ENCODE measurements at regions of chr17 and their contacts with region 1.

Region 1: DNA sequence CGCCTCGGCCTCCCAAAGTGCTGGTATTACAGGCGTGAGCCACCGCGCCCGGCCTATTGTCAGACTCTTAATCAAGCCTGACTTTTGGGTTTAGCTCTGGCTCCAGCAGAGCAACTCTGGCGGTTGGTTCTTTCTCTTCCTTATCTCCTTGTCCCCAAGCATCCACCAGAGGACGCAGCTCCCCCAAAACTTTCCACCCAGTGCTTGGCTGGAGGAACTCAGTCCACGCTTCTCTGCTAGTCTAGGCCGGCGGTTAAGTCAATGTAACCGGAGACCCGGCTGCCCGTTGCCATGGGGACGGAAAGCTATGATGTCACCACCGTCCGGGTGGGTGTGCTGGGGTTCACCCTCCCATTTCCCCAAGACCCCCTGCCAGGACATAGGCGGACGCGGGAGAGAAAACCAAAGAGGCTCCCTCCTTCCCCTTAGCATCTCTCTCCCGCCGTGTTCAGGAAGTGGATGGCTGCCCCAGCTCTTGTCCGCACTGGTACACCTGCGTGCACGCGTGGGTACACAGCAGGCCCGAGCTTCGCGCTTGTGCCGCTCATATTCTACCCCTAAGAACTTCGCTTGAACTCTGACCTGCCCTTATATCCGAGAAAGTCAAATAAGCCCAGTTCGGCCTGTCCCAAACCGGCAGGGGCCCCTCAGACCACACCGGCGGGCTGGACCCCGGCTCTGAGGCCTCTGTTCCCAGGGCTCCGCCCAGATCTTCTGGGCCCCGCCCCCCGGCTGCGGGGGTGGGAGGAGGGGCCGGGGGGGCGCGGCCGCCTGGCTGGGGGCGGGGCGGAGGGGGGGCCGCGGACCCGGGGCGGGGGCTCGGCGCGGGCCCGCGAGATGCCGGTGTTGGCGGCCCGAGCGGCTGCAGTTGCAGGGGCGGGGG is at the start of gene RND2:
- DNase-seq: peak; percentile 86 to 90 (median 88)
- ATAC-seq: peak; percentile 63 to 79 (median 72)
- H3K4me3 ChIP-seq: peak within 1 kb of the TSS in 11 of 12 donors; percentile 36 to 80 (median 62)
- H3K27ac ChIP-seq: peak within 1 kb of the TSS in 10 of 12 donors; percentile 13 to 83 (median 60)
- H3K4me1 ChIP-seq: peaks cover 0 to 36% (median 22%) of the 10 kb centered on the region in 12 donors
- H3K27me3 ChIP-seq: no peaks in the 10 kb centered on the region
- CTCF ChIP-seq: peak; percentile 44 to 85 (median 70)
- POLR2A ChIP-seq: peak in 1 of 2 donors; percentile 36
- total RNA-seq, gene RND2: 0.29 to 1.6 (median 0.56) TPM

Region 2: DNA sequence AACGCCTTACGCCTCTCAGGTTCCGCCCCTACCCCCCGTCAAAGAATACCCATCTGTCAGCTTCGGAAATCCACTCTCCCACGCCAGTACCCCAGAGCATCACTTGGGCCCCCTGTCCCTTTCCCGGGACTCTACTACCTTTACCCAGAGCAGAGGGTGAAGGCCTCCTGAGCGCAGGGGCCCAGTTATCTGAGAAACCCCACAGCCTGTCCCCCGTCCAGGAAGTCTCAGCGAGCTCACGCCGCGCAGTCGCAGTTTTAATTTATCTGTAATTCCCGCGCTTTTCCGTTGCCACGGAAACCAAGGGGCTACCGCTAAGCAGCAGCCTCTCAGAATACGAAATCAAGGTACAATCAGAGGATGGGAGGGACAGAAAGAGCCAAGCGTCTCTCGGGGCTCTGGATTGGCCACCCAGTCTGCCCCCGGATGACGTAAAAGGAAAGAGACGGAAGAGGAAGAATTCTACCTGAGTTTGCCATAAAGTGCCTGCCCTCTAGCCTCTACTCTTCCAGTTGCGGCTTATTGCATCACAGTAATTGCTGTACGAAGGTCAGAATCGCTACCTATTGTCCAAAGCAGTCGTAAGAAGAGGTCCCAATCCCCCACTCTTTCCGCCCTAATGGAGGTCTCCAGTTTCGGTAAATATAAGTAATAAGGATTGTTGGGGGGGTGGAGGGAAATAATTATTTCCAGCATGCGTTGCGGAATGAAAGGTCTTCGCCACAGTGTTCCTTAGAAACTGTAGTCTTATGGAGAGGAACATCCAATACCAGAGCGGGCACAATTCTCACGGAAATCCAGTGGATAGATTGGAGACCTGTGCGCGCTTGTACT is 100.7 kb after region 1 on chr17 and contains the start of gene BRCA1:
- intact Hi-C with region 1: loop called in 5 of 10 experiments (anchors 5 to 10 kb)
- DNase-seq: peak; percentile 89 to 94 (median 92)
- ATAC-seq: peak; percentile 100
- H3K4me3 ChIP-seq: peak within 1 kb of the TSS; percentile 15 to 95 (median 68)
- H3K27ac ChIP-seq: peak within 1 kb of the TSS; percentile 29 to 78 (median 72)
- H3K4me1 ChIP-seq: peaks cover 0 to 32% (median 10%) of the 10 kb centered on the region in 12 donors
- H3K27me3 ChIP-seq: no peaks in the 10 kb centered on the region
- CTCF ChIP-seq: peak in 1 of 12 donors; percentile 8
- POLR2A ChIP-seq: peak in 1 of 2 donors; percentile 42
- total RNA-seq, gene BRCA1: 4.8 to 11.7 (median 8.4) TPM

Region 3: DNA sequence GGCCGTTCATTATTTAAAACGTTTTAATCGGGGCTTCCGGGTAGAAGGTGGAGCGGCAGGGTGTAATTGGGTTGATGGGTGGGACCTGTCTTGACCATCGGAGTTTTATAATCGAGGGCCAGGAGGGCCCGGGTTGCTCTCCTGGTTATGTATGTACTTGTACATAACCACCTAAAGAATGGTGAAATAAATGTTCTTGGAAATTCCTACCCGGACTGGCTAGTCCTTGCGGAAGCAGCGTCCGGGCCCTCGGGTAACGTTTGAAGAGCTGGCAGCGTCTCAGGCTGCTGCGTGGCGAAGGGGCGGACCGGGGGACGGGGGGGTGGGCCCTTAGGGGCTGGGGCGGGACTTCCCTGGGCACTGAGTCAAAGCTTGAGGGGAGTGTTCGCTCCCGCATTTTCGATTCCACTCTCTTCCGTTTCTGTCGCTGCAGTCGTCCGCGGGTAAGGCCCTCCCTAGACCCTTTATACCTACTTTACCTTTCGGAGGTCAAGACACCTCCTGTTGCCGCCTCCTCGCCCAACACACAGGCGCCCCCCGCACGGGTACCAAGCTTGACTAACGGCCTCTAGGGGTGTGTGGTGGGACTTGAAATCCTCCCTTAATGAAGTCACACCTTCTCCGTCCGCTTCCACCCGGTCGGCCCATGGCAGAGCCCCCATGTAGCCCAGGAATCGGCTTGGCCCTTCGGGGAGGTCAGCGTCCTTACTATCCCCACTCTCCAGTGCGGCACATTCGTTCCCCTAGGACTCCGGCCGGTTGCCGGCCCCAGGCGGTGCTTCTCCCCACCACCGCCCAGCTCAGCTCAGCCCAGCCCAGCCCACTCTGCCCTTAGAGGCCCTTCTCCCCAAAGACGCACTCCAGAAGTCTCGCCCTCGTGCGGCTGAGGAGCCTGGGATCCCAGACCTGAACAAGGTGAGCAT is 187.1 kb after region 1 on chr17 and contains the start of gene TMEM106A:
- intact Hi-C with region 1: loop called in 2 of 10 experiments (anchors 10 kb)
- DNase-seq: peak; percentile 81 to 89 (median 84)
- ATAC-seq: peak; percentile 81 to 94 (median 90)
- H3K4me3 ChIP-seq: peak within 1 kb of the TSS; percentile 8 to 85 (median 65)
- H3K27ac ChIP-seq: peak within 1 kb of the TSS; percentile 26 to 95 (median 82)
- H3K4me1 ChIP-seq: peaks cover 0 to 35% (median 12%) of the 10 kb centered on the region in 12 donors
- H3K27me3 ChIP-seq: no peaks in the 10 kb centered on the region
- CTCF ChIP-seq: peak in 8 of 12 donors; percentile 9 to 52 (median 34)
- POLR2A ChIP-seq: no peak
- total RNA-seq, gene TMEM106A: 1.3 to 26.0 (median 2.0) TPM

Region 4: GRCh38 chr17:43330876-43331639 is 306.4 kb after region 1 on chr17:
- intact Hi-C with region 1: loop called in 4 of 10 experiments (anchors 5 to 10 kb)
- DNase-seq: no peak
- ATAC-seq: no peak
- H3K4me3 ChIP-seq: no peak overlapping the region
- H3K27ac ChIP-seq: no peak overlapping the region
- H3K4me1 ChIP-seq: peaks cover 0 to 15% (median 5%) of the 10 kb centered on the region in 12 donors
- H3K27me3 ChIP-seq: peaks cover 0 to 9% (median 0%) of the 10 kb centered on the region in 9 donors
- CTCF ChIP-seq: no peak
- POLR2A ChIP-seq: no peak

Measured in heart left ventricle (tissue), 16 donors.